Activated CD8-positive, alpha-beta T cell treated with anti-CD3 and anti-CD28 coated beads for 36 hours (primary cell): ENCODE measurements at regions of chr10 and their contacts with region 1.

Region 1: GRCh38 chr10:115417585-115418265 is 324.6 kb downstream of the ATRNL1 start:
- DNase-seq: peak; percentile 18
- ATAC-seq: peak; percentile 45
- H3K4me3 Mint-ChIP-seq: no peak overlapping the region
- H3K27ac Mint-ChIP-seq: no peak overlapping the region
- H3K4me1 Mint-ChIP-seq: no peaks in the 10 kb centered on the region
- H3K27me3 Mint-ChIP-seq: no peaks in the 10 kb centered on the region
- CTCF ChIP-seq: no peak

Region 2: GRCh38 chr10:115171392-115171960 is 246.2 kb before region 1 on chr10:
- CTCF ChIA-PET with region 1: interaction called, 3 read pairs
- POLR2A ChIA-PET with region 1: no interaction called
- intact Hi-C with region 1: loop called (anchors 10 kb)
- DNase-seq: no peak
- ATAC-seq: no peak
- H3K4me3 Mint-ChIP-seq: no peak overlapping the region
- H3K27ac Mint-ChIP-seq: no peak overlapping the region
- H3K4me1 Mint-ChIP-seq: no peaks in the 10 kb centered on the region
- H3K27me3 Mint-ChIP-seq: peaks cover 7% of the 10 kb centered on the region
- CTCF ChIP-seq: peak; percentile 51

Region 3: GRCh38 chr10:115402690-115403089 is 15.0 kb before region 1 on chr10:
- CTCF ChIA-PET with region 1: no interaction called
- POLR2A ChIA-PET with region 1: no interaction called
- intact Hi-C with region 1: no loop called
- DNase-seq: no peak
- ATAC-seq: no peak
- H3K4me3 Mint-ChIP-seq: no peak overlapping the region
- H3K27ac Mint-ChIP-seq: no peak overlapping the region
- H3K4me1 Mint-ChIP-seq: no peaks in the 10 kb centered on the region
- H3K27me3 Mint-ChIP-seq: no peaks in the 10 kb centered on the region
- CTCF ChIP-seq: no peak